PC-9 (cell line): ENCODE measurements at regions of chr12 and their contacts with region 1.

Region 1: DNA sequence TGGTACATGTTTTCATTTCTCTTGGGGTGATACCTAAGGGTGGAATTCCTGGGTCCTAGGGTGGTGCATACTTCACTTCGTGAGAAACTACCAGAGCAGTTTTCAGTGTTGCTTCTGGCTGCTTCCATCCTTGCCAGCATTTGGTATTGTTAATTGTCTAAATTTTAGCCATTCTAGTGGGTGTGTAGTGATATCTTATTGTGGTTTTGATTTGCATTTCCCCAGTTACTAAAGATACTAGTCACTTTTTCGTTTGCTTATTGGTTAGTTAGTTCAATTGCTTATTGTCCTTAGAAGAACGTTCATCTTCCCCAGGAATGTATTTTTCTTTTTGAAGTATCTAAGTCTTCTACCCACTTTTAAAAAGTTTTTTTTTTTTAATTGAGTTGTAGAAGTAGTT is 80.2 kb downstream of the ERC1 start:
- DNase-seq: no peak
- H3K4me3 ChIP-seq: no peak overlapping the region
- H3K27ac ChIP-seq: no peak overlapping the region
- H3K4me1 ChIP-seq: no peaks in the 10 kb centered on the region
- H3K27me3 ChIP-seq: no peaks in the 10 kb centered on the region
- CTCF ChIP-seq: no peak

Region 2: GRCh38 chr12:694734-695503 is 376.3 kb before region 1 on chr12:
- CTCF ChIA-PET with region 1: interaction called, 18 read pairs
- POLR2A ChIA-PET with region 1: no interaction called
- intact Hi-C with region 1: no loop called
- DNase-seq: no peak
- H3K4me3 ChIP-seq: no peak overlapping the region
- H3K27ac ChIP-seq: no peak overlapping the region
- H3K4me1 ChIP-seq: no peaks in the 10 kb centered on the region
- H3K27me3 ChIP-seq: no peaks in the 10 kb centered on the region
- CTCF ChIP-seq: no peak

Region 3: DNA sequence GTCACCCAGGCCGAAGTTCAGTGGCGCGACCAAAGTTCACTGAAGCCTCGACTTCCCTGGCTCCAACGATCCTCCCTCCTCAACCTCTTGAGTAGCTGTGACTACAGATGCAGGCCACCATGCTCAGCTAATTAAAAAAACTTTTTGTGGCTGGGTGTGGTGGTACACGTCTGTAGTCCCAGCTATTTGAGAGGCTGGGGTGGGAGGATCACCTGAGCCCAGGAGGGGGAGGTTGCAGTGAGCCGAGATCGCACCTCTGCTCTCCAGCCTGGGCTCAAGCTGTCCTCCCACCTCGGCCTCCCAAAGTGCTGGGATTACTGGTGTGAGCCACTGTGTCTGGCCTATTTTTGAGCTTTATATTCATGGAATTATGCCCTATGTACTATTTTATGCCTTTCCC is 103.5 kb before region 1 on chr12:
- CTCF ChIA-PET with region 1: interaction called, 10 read pairs
- POLR2A ChIA-PET with region 1: no interaction called
- intact Hi-C with region 1: no loop called
- DNase-seq: no peak
- H3K4me3 ChIP-seq: no peak overlapping the region
- H3K27ac ChIP-seq: no peak overlapping the region
- H3K4me1 ChIP-seq: no peaks in the 10 kb centered on the region
- H3K27me3 ChIP-seq: no peaks in the 10 kb centered on the region
- CTCF ChIP-seq: no peak

Region 4: DNA sequence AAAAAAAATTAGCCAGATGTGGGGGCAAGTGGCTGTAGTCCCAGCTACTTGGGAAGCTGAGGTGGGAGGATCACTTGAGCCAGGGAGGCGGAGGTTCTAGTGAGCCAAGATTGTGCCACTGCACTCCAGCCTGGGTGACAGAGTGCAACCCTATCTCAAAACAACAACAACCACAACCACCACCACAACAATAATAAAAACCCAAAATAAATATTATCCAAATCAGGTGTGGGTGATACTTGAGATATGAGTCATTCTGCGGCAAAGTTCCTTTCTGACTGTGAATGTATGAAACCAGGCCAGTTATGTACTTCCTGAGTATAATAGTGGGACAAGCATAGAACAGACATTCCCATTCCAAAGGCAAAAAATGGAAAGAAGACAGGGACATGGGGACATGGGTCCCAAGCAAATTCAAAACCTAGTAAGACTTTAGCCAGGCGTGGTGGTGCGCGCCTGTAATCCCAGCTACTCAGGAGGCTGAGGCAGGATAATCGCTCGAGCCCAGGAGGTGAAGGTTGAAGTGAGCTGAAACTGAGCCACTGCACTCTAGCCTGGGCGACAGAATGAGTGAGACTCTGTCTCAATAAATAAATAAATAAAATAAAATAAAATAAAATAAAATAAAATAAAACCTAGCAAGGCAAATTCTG is 89.9 kb before region 1 on chr12:
- CTCF ChIA-PET with region 1: no interaction called
- POLR2A ChIA-PET with region 1: no interaction called
- intact Hi-C with region 1: no loop called
- DNase-seq: peak; percentile 37 to 87
- H3K4me3 ChIP-seq: no peak overlapping the region
- H3K27ac ChIP-seq: peak overlapping the region; percentile 37; the same call in 1 of the 2 replicates
- H3K4me1 ChIP-seq: peaks cover 9% of the 10 kb centered on the region
- H3K27me3 ChIP-seq: no peaks in the 10 kb centered on the region
- CTCF ChIP-seq: no peak